Natural killer cell (primary cell): ENCODE measurements at regions of chr19 and their contacts with region 1.

Region 1: GRCh38 chr19:12484371-12485051 is at the start of gene ZNF709:
- DNase-seq: peak; percentile 89 to 93
- ATAC-seq: peak; percentile 97 to 98 (median 97)
- H3K4me3 ChIP-seq: peak within 1 kb of the TSS; percentile 84
- H3K4me3 Mint-ChIP-seq: peak within 1 kb of the TSS; percentile 94
- H3K27ac ChIP-seq: peak within 1 kb of the TSS; percentile 69
- H3K27ac Mint-ChIP-seq: peak within 1 kb of the TSS; percentile 83 to 96
- H3K4me1 ChIP-seq: peaks cover 25% of the 10 kb centered on the region
- H3K4me1 Mint-ChIP-seq: peaks cover 23 to 31% of the 10 kb centered on the region in 2 donors
- H3K27me3 ChIP-seq: no peaks in the 10 kb centered on the region
- H3K27me3 Mint-ChIP-seq: no peaks in the 10 kb centered on the region
- CTCF ChIP-seq: no peak
- total RNA-seq, gene ZNF709: 4.1 to 4.7 (median 4.1) TPM

Region 2: GRCh38 chr19:12440541-12441316 is 43.8 kb before region 1 on chr19 and contains the start of gene ZNF443:
- intact Hi-C with region 1: loop called (anchors 1 kb)
- DNase-seq: peak; percentile 97 to 100
- ATAC-seq: peak; percentile 94 to 99 (median 97)
- H3K4me3 ChIP-seq: peak within 1 kb of the TSS; percentile 85
- H3K4me3 Mint-ChIP-seq: peak within 1 kb of the TSS; percentile 100
- H3K27ac ChIP-seq: peak within 1 kb of the TSS; percentile 73
- H3K27ac Mint-ChIP-seq: peak within 1 kb of the TSS; percentile 91 to 99
- H3K4me1 ChIP-seq: peaks cover 14% of the 10 kb centered on the region
- H3K4me1 Mint-ChIP-seq: peaks cover 6 to 24% of the 10 kb centered on the region in 2 donors
- H3K27me3 ChIP-seq: no peaks in the 10 kb centered on the region
- H3K27me3 Mint-ChIP-seq: no peaks in the 10 kb centered on the region
- CTCF ChIP-seq: no peak
- total RNA-seq, gene ZNF443: 3.5 to 6.1 (median 3.9) TPM

Region 3: GRCh38 chr19:12495002-12495802 is 10.7 kb after region 1 on chr19:
- intact Hi-C with region 1: loop called (anchors 1 kb)
- DNase-seq: peak; percentile 88 to 96
- ATAC-seq: peak; percentile 97 to 99 (median 99)
- H3K4me3 ChIP-seq: peak overlapping the region; percentile 36
- H3K4me3 Mint-ChIP-seq: peak overlapping the region; percentile 87
- H3K27ac ChIP-seq: peak overlapping the region; percentile 55
- H3K27ac Mint-ChIP-seq: peak overlapping the region; percentile 66 to 90
- H3K4me1 ChIP-seq: peaks cover 9% of the 10 kb centered on the region
- H3K4me1 Mint-ChIP-seq: peaks cover 11 to 15% of the 10 kb centered on the region in 2 donors
- H3K27me3 ChIP-seq: no peaks in the 10 kb centered on the region
- H3K27me3 Mint-ChIP-seq: no peaks in the 10 kb centered on the region
- CTCF ChIP-seq: peak; percentile 42